Natural killer cell (primary cell): ENCODE measurements at regions of chr17 and their contacts with region 1.

Region 1: GRCh38 chr17:58587702-58588254 is 73.3 kb upstream of the MTMR4 start:
- DNase-seq: peak; percentile 29 to 82
- ATAC-seq: peak; percentile 68 to 80 (median 75)
- H3K4me3 ChIP-seq: no peak overlapping the region
- H3K4me3 Mint-ChIP-seq: no peak overlapping the region
- H3K27ac ChIP-seq: no peak overlapping the region
- H3K27ac Mint-ChIP-seq: no peak overlapping the region
- H3K4me1 ChIP-seq: peaks cover 5% of the 10 kb centered on the region
- H3K4me1 Mint-ChIP-seq: peaks cover 0 to 4% of the 10 kb centered on the region in 2 donors
- H3K27me3 ChIP-seq: no peaks in the 10 kb centered on the region
- H3K27me3 Mint-ChIP-seq: peaks cover 6 to 7% of the 10 kb centered on the region in 2 donors
- CTCF ChIP-seq: peak; percentile 94

Region 2: DNA sequence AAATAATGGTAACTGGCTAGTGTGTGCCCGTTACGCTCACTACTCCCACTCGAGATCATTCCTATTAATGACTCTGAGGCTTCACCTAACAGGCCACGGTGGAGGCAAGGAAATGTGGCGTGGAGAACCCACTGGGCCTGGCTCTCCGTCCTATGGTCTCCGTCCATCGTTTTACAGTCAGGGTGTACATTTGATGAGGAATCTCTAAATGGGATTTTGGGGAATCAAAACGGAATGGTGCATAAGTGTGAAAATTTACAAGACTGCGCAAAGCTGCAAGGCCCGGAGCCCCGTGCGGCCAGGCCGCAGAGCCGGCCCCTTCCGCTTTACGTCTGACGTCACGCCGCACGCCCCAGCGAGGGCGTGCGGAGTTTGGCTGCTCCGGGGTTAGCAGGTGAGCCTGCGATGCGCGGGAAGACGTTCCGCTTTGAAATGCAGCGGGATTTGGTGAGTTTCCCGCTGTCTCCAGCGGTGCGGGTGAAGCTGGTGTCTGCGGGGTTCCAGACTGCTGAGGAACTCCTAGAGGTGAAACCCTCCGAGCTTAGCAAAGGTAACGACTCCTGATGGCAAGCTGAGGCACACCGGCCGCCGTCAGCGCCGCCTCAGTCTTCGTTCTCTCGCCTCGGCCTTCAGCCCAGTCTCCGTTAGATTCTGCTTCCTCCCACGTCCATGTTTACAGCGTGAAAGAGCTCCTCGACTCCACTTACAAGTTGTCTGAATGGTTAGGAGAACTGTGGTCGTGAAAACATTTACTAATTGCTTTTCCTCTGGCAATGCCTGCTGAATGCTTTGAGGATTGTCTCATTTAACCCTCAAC is 104.7 kb after region 1 on chr17 and contains the start of gene RAD51C:
- intact Hi-C with region 1: loop called (anchors 5 kb)
- DNase-seq: peak; percentile 82 to 92
- ATAC-seq: peak; percentile 97 to 99 (median 99)
- H3K4me3 ChIP-seq: peak within 1 kb of the TSS; percentile 62
- H3K4me3 Mint-ChIP-seq: peak within 1 kb of the TSS; percentile 96
- H3K27ac ChIP-seq: peak within 1 kb of the TSS; percentile 74
- H3K27ac Mint-ChIP-seq: peak within 1 kb of the TSS; percentile 93
- H3K4me1 ChIP-seq: peaks cover 6% of the 10 kb centered on the region
- H3K4me1 Mint-ChIP-seq: peaks cover 20 to 21% of the 10 kb centered on the region in 2 donors
- H3K27me3 ChIP-seq: no peaks in the 10 kb centered on the region
- H3K27me3 Mint-ChIP-seq: peaks cover 2 to 5% of the 10 kb centered on the region in 2 donors
- CTCF ChIP-seq: no peak
- total RNA-seq, gene RAD51C: 13.4 to 18.9 (median 17.1) TPM

Region 3: GRCh38 chr17:58710936-58711775 is 123.4 kb after region 1 on chr17:
- intact Hi-C with region 1: loop called (anchors 1 kb)
- DNase-seq: peak in 1 of 2 donors; percentile 73
- ATAC-seq: no peak
- H3K4me3 ChIP-seq: no peak overlapping the region
- H3K4me3 Mint-ChIP-seq: no peak overlapping the region
- H3K27ac ChIP-seq: no peak overlapping the region
- H3K27ac Mint-ChIP-seq: peak overlapping the region in 1 of 2 donors; percentile 14
- H3K4me1 ChIP-seq: no peaks in the 10 kb centered on the region
- H3K4me1 Mint-ChIP-seq: peaks cover 5 to 7% of the 10 kb centered on the region in 2 donors
- H3K27me3 ChIP-seq: no peaks in the 10 kb centered on the region
- H3K27me3 Mint-ChIP-seq: no peaks in the 10 kb centered on the region
- CTCF ChIP-seq: peak; percentile 85